WTC11 (cell line): ENCODE measurements at regions of chr5 and their contacts with region 1.

Region 1: GRCh38 chr5:177454397-177455035 is 7.9 kb downstream of the PRR7 start:
- DNase-seq: peak; percentile 92
- ATAC-seq: peak; percentile 7
- H3K4me3 Mint-ChIP-seq: peak overlapping the region; percentile 81
- H3K27ac Mint-ChIP-seq: no peak overlapping the region
- H3K4me1 Mint-ChIP-seq: peaks cover 36% of the 10 kb centered on the region
- H3K27me3 Mint-ChIP-seq: peaks cover 19% of the 10 kb centered on the region
- CTCF ChIP-seq: peak; percentile 78

Region 2: GRCh38 chr5:176762489-176762888 is 692.0 kb before region 1 on chr5:
- CTCF ChIA-PET with region 1: no interaction called
- POLR2A ChIA-PET with region 1: no interaction called
- DNase-seq: no peak
- ATAC-seq: peak; percentile 77
- H3K4me3 Mint-ChIP-seq: no peak overlapping the region
- H3K27ac Mint-ChIP-seq: no peak overlapping the region
- H3K4me1 Mint-ChIP-seq: peaks cover 13% of the 10 kb centered on the region
- H3K27me3 Mint-ChIP-seq: peaks cover 4% of the 10 kb centered on the region
- CTCF ChIP-seq: no peak

Region 3: DNA sequence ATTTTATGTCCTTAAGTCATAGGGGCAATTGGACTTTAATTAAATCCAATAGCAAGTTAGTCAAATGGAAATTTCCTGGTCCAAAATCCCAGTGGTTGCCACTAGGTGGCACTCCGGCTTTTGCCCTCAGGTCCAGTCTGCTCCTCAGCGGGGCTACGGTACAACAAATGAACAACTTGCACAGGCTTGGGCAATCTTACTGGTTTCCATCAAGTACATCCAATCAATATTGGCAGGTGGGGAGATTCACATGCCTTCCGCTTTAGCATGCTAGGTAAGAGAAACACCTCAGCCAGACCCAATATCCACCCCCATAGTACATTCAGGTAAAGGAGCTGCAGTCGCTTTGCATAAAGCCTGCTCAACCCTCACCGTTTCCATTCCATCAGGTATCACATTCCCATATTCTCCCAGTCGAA is 136.5 kb before region 1 on chr5:
- CTCF ChIA-PET with region 1: interaction called, 91 read pairs
- POLR2A ChIA-PET with region 1: no interaction called
- DNase-seq: peak; percentile 83
- ATAC-seq: peak; percentile 57
- H3K4me3 Mint-ChIP-seq: peak overlapping the region; percentile 17; the same call in 1 of the 2 replicates
- H3K27ac Mint-ChIP-seq: peak overlapping the region; percentile 70
- H3K4me1 Mint-ChIP-seq: peaks cover 11% of the 10 kb centered on the region
- H3K27me3 Mint-ChIP-seq: no peaks in the 10 kb centered on the region
- CTCF ChIP-seq: peak; percentile 72

Region 4: GRCh38 chr5:177382423-177383029 is 72.0 kb before region 1 on chr5:
- CTCF ChIA-PET with region 1: interaction called, 15 read pairs
- POLR2A ChIA-PET with region 1: interaction called, 3 read pairs
- DNase-seq: peak; percentile 46
- ATAC-seq: peak; percentile 70
- H3K4me3 Mint-ChIP-seq: no peak overlapping the region
- H3K27ac Mint-ChIP-seq: no peak overlapping the region
- H3K4me1 Mint-ChIP-seq: peaks cover 17% of the 10 kb centered on the region
- H3K27me3 Mint-ChIP-seq: peaks cover 18% of the 10 kb centered on the region
- CTCF ChIP-seq: no peak

Region 5: GRCh38 chr5:177403792-177404640 is 50.5 kb before region 1 on chr5:
- CTCF ChIA-PET with region 1: interaction called, 91 read pairs
- POLR2A ChIA-PET with region 1: interaction called, 38 read pairs
- DNase-seq: peak; percentile 75
- ATAC-seq: peak; percentile 26
- H3K4me3 Mint-ChIP-seq: peak overlapping the region; percentile 84
- H3K27ac Mint-ChIP-seq: no peak overlapping the region
- H3K4me1 Mint-ChIP-seq: peaks cover 9% of the 10 kb centered on the region
- H3K27me3 Mint-ChIP-seq: peaks cover 83% of the 10 kb centered on the region
- CTCF ChIP-seq: no peak

Region 6: GRCh38 chr5:177440211-177440971 is 14.1 kb before region 1 on chr5:
- CTCF ChIA-PET with region 1: interaction called, 53 read pairs
- POLR2A ChIA-PET with region 1: interaction called, 8 read pairs
- DNase-seq: no peak
- ATAC-seq: peak; percentile 58
- H3K4me3 Mint-ChIP-seq: no peak overlapping the region
- H3K27ac Mint-ChIP-seq: peak overlapping the region; percentile 31; the same call in 1 of the 2 replicates
- H3K4me1 Mint-ChIP-seq: peaks cover 23% of the 10 kb centered on the region
- H3K27me3 Mint-ChIP-seq: peaks cover 15% of the 10 kb centered on the region
- CTCF ChIP-seq: no peak

Region 7: GRCh38 chr5:177478711-177479646 is 24.5 kb after region 1 on chr5:
- CTCF ChIA-PET with region 1: interaction called, 24 read pairs
- POLR2A ChIA-PET with region 1: interaction called, 8 read pairs
- DNase-seq: no peak
- ATAC-seq: no peak
- H3K4me3 Mint-ChIP-seq: no peak overlapping the region
- H3K27ac Mint-ChIP-seq: peak overlapping the region; percentile 57; the same call in 1 of the 2 replicates
- H3K4me1 Mint-ChIP-seq: peaks cover 27% of the 10 kb centered on the region
- H3K27me3 Mint-ChIP-seq: no peaks in the 10 kb centered on the region
- CTCF ChIP-seq: no peak

Region 8: DNA sequence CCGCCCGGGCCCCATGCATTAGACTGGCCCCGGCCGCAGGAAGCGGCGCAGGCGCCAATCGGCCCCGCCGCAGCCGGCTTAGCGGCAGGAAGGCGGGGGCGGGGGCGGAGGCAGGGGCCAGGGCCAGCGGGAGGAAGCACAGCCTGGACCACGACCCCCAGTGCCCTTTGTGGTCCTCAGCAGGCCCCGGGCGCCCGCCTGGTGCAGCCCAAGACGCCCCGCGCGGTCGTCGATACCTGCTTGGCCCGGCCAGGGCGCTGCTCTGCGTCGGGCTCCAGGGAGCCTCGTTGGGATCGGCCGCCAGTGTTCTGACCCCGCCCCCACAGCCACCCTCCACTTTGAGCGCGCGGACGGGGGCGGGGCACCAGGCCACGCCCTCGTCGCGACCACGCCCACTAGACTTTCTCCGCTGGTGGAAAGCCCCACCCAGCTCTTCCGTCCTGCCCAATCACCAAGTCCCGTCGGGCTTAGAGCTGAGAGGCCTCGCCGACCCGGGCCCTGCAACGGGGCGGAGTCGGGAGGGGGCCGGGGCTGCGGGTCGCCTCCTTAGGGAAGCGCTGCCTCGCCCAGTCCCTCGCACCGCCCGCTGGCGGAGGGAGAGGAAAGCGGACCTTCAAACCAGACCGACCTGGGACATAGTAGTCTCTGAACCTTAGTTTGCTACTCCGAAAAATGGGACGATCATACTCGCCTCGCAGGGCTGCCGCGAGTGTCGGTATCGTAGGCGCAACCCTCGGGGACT is 42.9 kb after region 1 on chr5 and contains the start of gene PDLIM7:
- CTCF ChIA-PET with region 1: interaction called, 45 read pairs
- POLR2A ChIA-PET with region 1: interaction called, 16 read pairs
- DNase-seq: peak; percentile 97
- ATAC-seq: peak; percentile 71
- H3K4me3 Mint-ChIP-seq: peak within 1 kb of the TSS; percentile 80
- H3K27ac Mint-ChIP-seq: peak within 1 kb of the TSS; percentile 92; the same call in 1 of the 2 replicates
- H3K4me1 Mint-ChIP-seq: peaks cover 36% of the 10 kb centered on the region
- H3K27me3 Mint-ChIP-seq: peaks cover 31% of the 10 kb centered on the region
- CTCF ChIP-seq: no peak
- total RNA-seq, gene PDLIM7: 124 to 142 TPM (median 139 TPM) in 3 replicates